Aorta (tissue), 5 donors: ENCODE measurements at regions of chr14 and their contacts with region 1.

Region 1: GRCh38 chr14:31026395-31027118 is 378 bp upstream of the STRN3 start:
- DNase-seq: peak; percentile 98
- ATAC-seq: peak; percentile 99
- H3K4me3 ChIP-seq: peak overlapping the region; percentile 50 to 93
- H3K27ac ChIP-seq: peak overlapping the region; percentile 51 to 96
- H3K4me1 ChIP-seq: no peaks in the 10 kb centered on the region
- H3K27me3 ChIP-seq: no peaks in the 10 kb centered on the region

Region 2: GRCh38 chr14:30982533-30982932 is 44.0 kb before region 1 on chr14:
- intact Hi-C with region 1: loop called in 1 of 2 experiments (anchors 5 kb)
- DNase-seq: no peak
- ATAC-seq: no peak
- H3K4me3 ChIP-seq: no peak overlapping the region
- H3K27ac ChIP-seq: no peak overlapping the region
- H3K4me1 ChIP-seq: no peaks in the 10 kb centered on the region
- H3K27me3 ChIP-seq: no peaks in the 10 kb centered on the region

Region 3: DNA sequence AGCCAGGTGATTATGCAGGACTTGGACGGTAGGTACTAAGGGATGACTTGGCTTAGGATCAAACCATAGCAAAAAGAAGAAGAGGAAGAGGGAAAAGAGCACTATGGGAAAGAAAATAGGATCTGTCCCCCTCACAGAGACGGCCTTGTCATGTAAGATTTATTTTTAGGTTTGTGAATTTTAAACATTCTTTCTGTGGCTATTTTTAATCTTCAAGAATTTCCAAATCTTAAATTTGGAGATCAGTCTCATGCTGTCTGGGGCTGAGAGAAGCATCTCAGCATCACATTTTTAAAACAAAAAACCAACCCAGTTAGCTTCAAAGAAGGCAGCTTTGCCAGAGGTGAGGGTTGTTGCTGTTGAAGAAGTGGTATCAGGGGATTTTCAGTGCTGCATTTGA is 52.2 kb after region 1 on chr14:
- intact Hi-C with region 1: loop called (anchors 5 kb)
- DNase-seq: no peak
- ATAC-seq: no peak
- H3K4me3 ChIP-seq: no peak overlapping the region
- H3K27ac ChIP-seq: no peak overlapping the region
- H3K4me1 ChIP-seq: peaks cover 3 to 5% of the 10 kb centered on the region in 2 donors
- H3K27me3 ChIP-seq: no peaks in the 10 kb centered on the region

Region 4: GRCh38 chr14:31084385-31084784 is 57.8 kb after region 1 on chr14:
- intact Hi-C with region 1: loop called (anchors 5 kb)
- DNase-seq: no peak
- ATAC-seq: no peak
- H3K4me3 ChIP-seq: no peak overlapping the region
- H3K27ac ChIP-seq: no peak overlapping the region
- H3K4me1 ChIP-seq: no peaks in the 10 kb centered on the region
- H3K27me3 ChIP-seq: no peaks in the 10 kb centered on the region

Region 5: GRCh38 chr14:31476131-31476866 is 449.7 kb after region 1 on chr14:
- intact Hi-C with region 1: no loop called
- DNase-seq: no peak
- ATAC-seq: no peak
- H3K4me3 ChIP-seq: no peak overlapping the region
- H3K27ac ChIP-seq: no peak overlapping the region
- H3K4me1 ChIP-seq: peaks cover 0 to 3% of the 10 kb centered on the region in 2 donors
- H3K27me3 ChIP-seq: no peaks in the 10 kb centered on the region